WTC11 (cell line): ENCODE measurements at regions of chr12 and their contacts with region 1.

Region 1: GRCh38 chr12:4417455-4417854 is 28.2 kb downstream of the FGF6 start:
- DNase-seq: no peak
- ATAC-seq: no peak
- H3K4me3 Mint-ChIP-seq: no peak overlapping the region
- H3K27ac Mint-ChIP-seq: no peak overlapping the region
- H3K4me1 Mint-ChIP-seq: peaks cover 3% of the 10 kb centered on the region; the same call in 1 of the 2 replicates
- H3K27me3 Mint-ChIP-seq: no peaks in the 10 kb centered on the region
- CTCF ChIP-seq: no peak

Region 2: GRCh38 chr12:4370265-4370664 is 47.2 kb before region 1 on chr12:
- CTCF ChIA-PET with region 1: interaction called, 11 read pairs
- POLR2A ChIA-PET with region 1: no interaction called
- DNase-seq: no peak
- ATAC-seq: no peak
- H3K4me3 Mint-ChIP-seq: no peak overlapping the region
- H3K27ac Mint-ChIP-seq: no peak overlapping the region
- H3K4me1 Mint-ChIP-seq: no peaks in the 10 kb centered on the region
- H3K27me3 Mint-ChIP-seq: no peaks in the 10 kb centered on the region; the same call in none of the 2 replicates
- CTCF ChIP-seq: no peak

Region 3: DNA sequence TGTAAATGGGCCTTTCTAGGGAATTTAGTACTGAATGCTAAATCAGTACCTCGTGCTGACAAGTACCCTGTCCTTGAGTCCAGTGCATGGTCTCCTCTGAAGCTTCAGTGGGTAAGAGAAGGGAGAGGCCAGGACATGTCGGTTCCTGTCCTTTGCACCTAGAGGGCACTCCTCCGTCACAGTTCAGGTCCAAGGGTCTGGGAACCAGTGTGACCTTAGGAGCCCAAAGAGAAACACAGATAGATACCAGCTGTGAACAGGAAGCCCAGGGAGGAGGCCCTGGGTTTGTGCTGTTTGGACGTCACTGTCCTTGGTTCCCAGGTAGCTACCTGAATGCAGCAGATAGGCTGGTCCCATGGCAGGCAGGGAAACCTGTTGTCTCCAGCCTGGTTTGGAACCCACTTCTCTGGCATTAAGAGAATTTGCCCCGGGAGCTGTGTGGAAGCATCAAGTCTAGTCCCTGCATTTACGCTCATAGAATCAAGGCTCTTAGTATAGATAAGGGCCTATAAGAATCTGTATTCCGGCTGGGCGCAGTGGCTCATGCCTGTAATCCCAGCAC is 34.1 kb before region 1 on chr12:
- CTCF ChIA-PET with region 1: interaction called, 20 read pairs
- POLR2A ChIA-PET with region 1: no interaction called
- DNase-seq: peak; percentile 70
- ATAC-seq: peak; percentile 85
- H3K4me3 Mint-ChIP-seq: no peak overlapping the region
- H3K27ac Mint-ChIP-seq: no peak overlapping the region
- H3K4me1 Mint-ChIP-seq: peaks cover 24% of the 10 kb centered on the region
- H3K27me3 Mint-ChIP-seq: peaks cover 10% of the 10 kb centered on the region
- CTCF ChIP-seq: peak; percentile 34; the same call in 1 of the 2 replicates